ENCODE measurements at regions of chr4 and their contacts with region 1.

Region 1: GRCh38 chr4:24419181-24420034 is 164.9 kb downstream of the DHX15 start:
- DNase-seq: peak; percentile 86
- ATAC-seq: peak; percentile 88

Region 2: GRCh38 chr4:23368081-23368697 is 1051.2 kb before region 1 on chr4:
- intact Hi-C with region 1: loop called (anchors 5 kb)
- DNase-seq: no peak
- ATAC-seq: peak; percentile 87

Region 3: GRCh38 chr4:23680671-23681518 is 738.5 kb before region 1 on chr4:
- intact Hi-C with region 1: loop called (anchors 2 kb)
- DNase-seq: no peak
- ATAC-seq: no peak

Region 4: GRCh38 chr4:24195976-24196736 is 223.3 kb before region 1 on chr4:
- intact Hi-C with region 1: loop called (anchors 5 kb)
- DNase-seq: no peak
- ATAC-seq: peak; percentile 59

Region 5: DNA sequence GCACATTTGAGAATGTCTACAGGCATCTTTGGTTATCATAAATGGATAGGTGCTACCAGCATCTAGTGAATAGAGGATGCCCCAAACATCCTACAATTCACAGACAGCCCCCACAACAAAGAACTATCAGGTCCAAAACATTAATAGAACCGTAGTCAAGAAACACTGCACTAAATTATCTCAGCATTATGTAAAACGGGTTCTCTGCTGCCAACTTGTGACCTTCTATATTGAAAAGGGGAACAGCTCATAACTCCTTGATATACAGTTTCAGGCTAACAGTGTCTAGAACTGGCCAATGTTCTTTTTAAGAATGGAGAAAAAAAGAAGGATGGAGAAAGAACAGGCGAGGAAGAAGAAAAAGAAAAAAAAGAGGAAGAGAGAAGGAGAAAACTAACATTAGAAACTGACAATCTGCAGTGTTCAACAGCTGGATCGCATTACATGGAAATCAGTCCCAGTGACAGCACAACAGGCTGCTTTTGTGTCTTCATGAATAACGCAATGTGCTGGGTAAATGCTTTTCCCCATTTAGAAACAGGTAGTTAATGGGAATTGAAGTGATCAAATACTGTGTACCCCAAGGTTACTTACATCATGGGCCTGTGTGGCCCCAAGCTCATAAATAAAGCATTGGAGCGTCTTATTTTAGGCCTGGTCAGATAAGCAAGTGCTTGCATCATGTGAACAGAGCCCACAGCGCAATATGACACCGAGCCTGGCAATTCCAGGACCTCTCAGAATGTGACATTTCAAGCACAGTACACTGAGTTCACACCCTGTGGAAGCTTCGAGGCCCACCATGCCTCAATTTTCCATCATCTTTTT is 174.5 kb before region 1 on chr4:
- intact Hi-C with region 1: loop called (anchors 5 kb)
- DNase-seq: peak; percentile 77
- ATAC-seq: peak; percentile 94

Measured in Right ventricle myocardium inferior (tissue), 1 donor.